IMR-90 (cell line): ENCODE measurements at regions of chr17 and their contacts with region 1.

Region 1: GRCh38 chr17:7687908-7688807 is at the start of gene WRAP53:
- DNase-seq: peak; percentile 99
- ATAC-seq: peak; percentile 90
- H3K4me3 ChIP-seq: peak within 1 kb of the TSS; percentile 83
- H3K27ac ChIP-seq: peak within 1 kb of the TSS; percentile 96
- H3K4me1 ChIP-seq: no peaks in the 10 kb centered on the region
- H3K27me3 ChIP-seq: no peaks in the 10 kb centered on the region
- CTCF ChIP-seq: peak; percentile 99; the same call in 1 of the 2 replicates
- POLR2A ChIP-seq: peak; percentile 48
- RAD21 ChIP-seq: peak; percentile 78
- total RNA-seq, gene WRAP53: 5.0 and 6.6 TPM in 2 replicates

Region 2: DNA sequence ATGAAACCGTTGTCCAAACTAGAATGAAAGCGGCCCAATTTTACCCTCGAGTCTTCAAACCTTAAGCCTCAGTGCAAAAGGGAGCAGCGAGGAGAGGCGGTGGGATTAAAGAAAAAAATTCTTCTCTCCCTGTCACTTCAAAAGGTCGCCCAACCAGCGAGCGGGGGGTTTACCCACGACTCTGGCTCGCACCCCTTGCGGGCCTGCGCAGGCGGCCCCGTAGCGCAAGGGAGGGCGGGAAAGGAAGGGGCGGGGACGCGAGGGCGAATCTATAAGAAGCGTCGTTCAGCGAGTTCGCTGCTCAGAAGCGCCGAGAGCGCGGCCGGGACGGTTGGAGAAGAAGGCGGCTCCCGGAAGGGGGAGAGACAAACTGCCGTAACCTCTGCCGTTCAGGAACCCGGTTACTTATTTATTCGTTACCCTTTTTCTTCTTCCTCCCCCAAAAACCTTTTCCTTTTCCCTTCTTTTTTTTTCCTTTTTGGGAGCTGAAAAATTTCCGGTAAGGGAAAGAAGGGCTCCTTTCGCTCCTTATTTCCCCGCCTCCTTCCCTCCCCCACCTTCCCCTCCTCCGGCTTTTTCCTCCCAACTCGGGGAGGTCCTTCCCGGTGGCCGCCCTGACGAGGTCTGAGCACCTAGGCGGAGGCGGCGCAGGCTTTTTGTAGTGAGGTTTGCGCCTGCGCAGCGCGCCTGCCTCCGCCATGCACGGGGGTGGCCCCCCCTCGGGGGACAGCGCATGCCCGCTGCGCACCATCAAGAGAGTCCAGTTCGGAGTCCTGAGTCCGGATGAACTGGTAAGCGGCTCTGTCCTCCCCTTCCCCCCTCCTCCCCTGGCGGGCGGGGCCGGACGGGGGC is 203.9 kb before region 1 on chr17 and contains the start of gene POLR2A:
- CTCF ChIA-PET with region 1: no interaction called
- POLR2A ChIA-PET with region 1: no interaction called
- dilution Hi-C with region 1: no loop called
- in situ Hi-C with region 1: no loop called
- intact Hi-C with region 1: loop called (anchors 5 kb)
- DNase-seq: peak; percentile 98
- ATAC-seq: peak; percentile 72
- H3K4me3 ChIP-seq: peak within 1 kb of the TSS; percentile 73
- H3K27ac ChIP-seq: peak within 1 kb of the TSS; percentile 99
- H3K4me1 ChIP-seq: peaks cover 14% of the 10 kb centered on the region
- H3K27me3 ChIP-seq: no peaks in the 10 kb centered on the region
- CTCF ChIP-seq: no peak
- POLR2A ChIP-seq: peak; percentile 100
- RAD21 ChIP-seq: no peak; the same call in 1 of the 2 replicates
- total RNA-seq, gene POLR2A: 56.4 and 56.6 TPM in 2 replicates

Region 3: GRCh38 chr17:7589204-7589868 is 98.8 kb before region 1 on chr17:
- CTCF ChIA-PET with region 1: no interaction called
- POLR2A ChIA-PET with region 1: interaction called, 3 read pairs
- dilution Hi-C with region 1: no loop called
- in situ Hi-C with region 1: no loop called
- intact Hi-C with region 1: loop called (anchors 1 kb)
- DNase-seq: peak; percentile 83
- ATAC-seq: peak; percentile 64
- H3K4me3 ChIP-seq: no peak overlapping the region
- H3K27ac ChIP-seq: no peak overlapping the region; the same call in 1 of the 2 replicates
- H3K4me1 ChIP-seq: peaks cover 32% of the 10 kb centered on the region
- H3K27me3 ChIP-seq: no peaks in the 10 kb centered on the region
- CTCF ChIP-seq: peak; percentile 79
- POLR2A ChIP-seq: peak; percentile 41; the same call in 1 of the 2 replicates
- RAD21 ChIP-seq: peak; percentile 78

Region 4: GRCh38 chr17:7614422-7615264 is 73.5 kb before region 1 on chr17 and contains the start of gene FXR2:
- CTCF ChIA-PET with region 1: interaction called, 12 read pairs
- POLR2A ChIA-PET with region 1: interaction called, 8 read pairs
- dilution Hi-C with region 1: no loop called
- in situ Hi-C with region 1: no loop called
- intact Hi-C with region 1: loop called (anchors 2 kb)
- DNase-seq: peak; percentile 100
- ATAC-seq: peak; percentile 96
- H3K4me3 ChIP-seq: peak within 1 kb of the TSS; percentile 78
- H3K27ac ChIP-seq: peak within 1 kb of the TSS; percentile 75
- H3K4me1 ChIP-seq: peaks cover 7% of the 10 kb centered on the region
- H3K27me3 ChIP-seq: no peaks in the 10 kb centered on the region
- CTCF ChIP-seq: peak; percentile 87
- POLR2A ChIP-seq: peak; percentile 68
- RAD21 ChIP-seq: peak; percentile 37
- total RNA-seq, gene FXR2: 38.6 and 39.1 TPM in 2 replicates

Region 5: GRCh38 chr17:7632492-7632894 is 55.7 kb before region 1 on chr17:
- CTCF ChIA-PET with region 1: interaction called, 27 read pairs
- POLR2A ChIA-PET with region 1: interaction called, 9 read pairs
- dilution Hi-C with region 1: no loop called
- in situ Hi-C with region 1: no loop called
- intact Hi-C with region 1: loop called (anchors 1 kb)
- DNase-seq: peak; percentile 54
- ATAC-seq: peak; percentile 35
- H3K4me3 ChIP-seq: no peak overlapping the region
- H3K27ac ChIP-seq: no peak overlapping the region
- H3K4me1 ChIP-seq: 0 out of 2 replicates have a peak, but pooled peaks cover 1% of the 10 kb centered on the region
- H3K27me3 ChIP-seq: peaks cover 4% of the 10 kb centered on the region; the same call in 1 of the 2 replicates
- CTCF ChIP-seq: peak; percentile 64
- POLR2A ChIP-seq: no peak
- RAD21 ChIP-seq: peak; percentile 56